GM12878 (cell line): ENCODE measurements at regions of chr1 and their contacts with region 1.

Region 1: GRCh38 chr1:179973198-179974110 is 18.8 kb downstream of the CEP350 start:
- DNase-seq: no peak
- ATAC-seq: peak; percentile 55; the same call in 2 of the 3 replicates
- H3K4me3 ChIP-seq: no peak overlapping the region
- H3K27ac ChIP-seq: no peak overlapping the region
- H3K4me1 ChIP-seq: no peaks in the 10 kb centered on the region; the same call in 1 of the 2 replicates
- H3K27me3 ChIP-seq: no peaks in the 10 kb centered on the region
- CTCF ChIP-seq: no peak; a peak in 1 of 6 replicates
- EP300 ChIP-seq: no peak
- POLR2A ChIP-seq: no peak
- RAD21 ChIP-seq: no peak

Region 2: DNA sequence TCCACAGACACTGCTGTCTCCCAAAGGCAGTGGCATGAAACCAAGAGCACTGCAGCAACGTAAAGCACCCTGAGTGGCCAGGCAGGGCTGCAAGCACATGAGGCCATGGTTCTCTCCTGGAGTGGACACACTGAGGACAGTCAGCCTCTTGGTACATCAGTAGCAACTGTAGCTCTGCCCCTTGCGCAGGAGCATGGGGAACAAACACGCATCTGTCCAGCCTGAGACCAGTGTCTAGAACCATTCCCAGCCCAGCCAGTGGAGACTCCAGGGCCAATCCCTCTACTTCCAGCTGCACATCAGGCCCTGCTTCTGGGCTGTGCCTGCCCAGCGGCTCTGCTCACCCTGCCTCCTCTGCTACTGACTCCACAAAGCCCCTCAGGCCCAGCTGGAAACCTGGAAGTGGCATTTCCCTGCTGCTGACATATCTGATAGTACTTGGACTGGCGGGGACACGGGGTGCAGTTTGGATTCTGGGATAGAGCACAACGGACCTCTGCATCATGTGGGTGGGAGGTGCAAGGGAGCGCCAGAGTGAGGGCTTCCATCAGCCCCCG is 144.8 kb before region 1 on chr1:
- CTCF ChIA-PET with region 1: no interaction called
- POLR2A ChIA-PET with region 1: no interaction called
- RAD21 ChIA-PET with region 1: no interaction called
- SMC1A ChIA-PET with region 1: no interaction called
- in situ Hi-C with region 1: no loop called
- intact Hi-C with region 1: no loop called
- DNase-seq: no peak
- ATAC-seq: no peak
- H3K4me3 ChIP-seq: no peak overlapping the region
- H3K27ac ChIP-seq: no peak overlapping the region
- H3K4me1 ChIP-seq: peaks cover 3% of the 10 kb centered on the region; the same call in 1 of the 2 replicates
- H3K27me3 ChIP-seq: no peaks in the 10 kb centered on the region; a peak in 1 of 4 replicates
- CTCF ChIP-seq: no peak
- EP300 ChIP-seq: no peak
- POLR2A ChIP-seq: no peak
- RAD21 ChIP-seq: no peak

Region 3: DNA sequence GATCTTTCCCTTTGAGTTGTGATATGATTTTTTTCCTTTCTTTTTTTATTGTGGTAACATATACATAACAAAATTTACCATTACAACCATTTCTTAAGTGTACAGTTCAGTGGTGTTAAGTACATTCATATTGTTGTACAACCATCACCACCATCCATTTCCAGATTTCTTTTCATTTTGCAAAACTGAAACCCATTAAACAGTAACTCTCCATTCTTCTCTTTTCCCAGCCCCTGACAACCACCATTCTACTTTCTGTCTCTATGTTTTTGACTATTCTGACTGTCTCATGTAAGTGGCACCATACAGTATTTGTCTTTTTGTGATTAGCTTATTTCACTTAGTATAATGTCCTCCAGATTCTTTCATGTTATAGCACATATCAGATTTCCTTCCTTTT is 11.5 kb after region 1 on chr1:
- CTCF ChIA-PET with region 1: interaction called, 11 read pairs
- POLR2A ChIA-PET with region 1: interaction called, 5 read pairs
- RAD21 ChIA-PET with region 1: interaction called, 3 read pairs
- SMC1A ChIA-PET with region 1: interaction called, 4 read pairs
- in situ Hi-C with region 1: no loop called
- intact Hi-C with region 1: no loop called
- DNase-seq: no peak
- ATAC-seq: peak; percentile 54; the same call in 2 of the 3 replicates
- H3K4me3 ChIP-seq: no peak overlapping the region
- H3K27ac ChIP-seq: no peak overlapping the region
- H3K4me1 ChIP-seq: no peaks in the 10 kb centered on the region
- H3K27me3 ChIP-seq: no peaks in the 10 kb centered on the region
- CTCF ChIP-seq: no peak
- EP300 ChIP-seq: no peak
- POLR2A ChIP-seq: no peak
- RAD21 ChIP-seq: no peak

Region 4: GRCh38 chr1:179996099-179996498 is 22.6 kb after region 1 on chr1:
- CTCF ChIA-PET with region 1: interaction called, 14 read pairs
- POLR2A ChIA-PET with region 1: no interaction called
- RAD21 ChIA-PET with region 1: interaction called, 5 read pairs
- SMC1A ChIA-PET with region 1: interaction called, 25 read pairs
- in situ Hi-C with region 1: no loop called
- intact Hi-C with region 1: no loop called
- DNase-seq: no peak
- ATAC-seq: peak; percentile 86
- H3K4me3 ChIP-seq: no peak overlapping the region
- H3K27ac ChIP-seq: no peak overlapping the region
- H3K4me1 ChIP-seq: peaks cover 17% of the 10 kb centered on the region
- H3K27me3 ChIP-seq: no peaks in the 10 kb centered on the region
- CTCF ChIP-seq: no peak
- EP300 ChIP-seq: no peak
- POLR2A ChIP-seq: no peak
- RAD21 ChIP-seq: no peak

Region 5: DNA sequence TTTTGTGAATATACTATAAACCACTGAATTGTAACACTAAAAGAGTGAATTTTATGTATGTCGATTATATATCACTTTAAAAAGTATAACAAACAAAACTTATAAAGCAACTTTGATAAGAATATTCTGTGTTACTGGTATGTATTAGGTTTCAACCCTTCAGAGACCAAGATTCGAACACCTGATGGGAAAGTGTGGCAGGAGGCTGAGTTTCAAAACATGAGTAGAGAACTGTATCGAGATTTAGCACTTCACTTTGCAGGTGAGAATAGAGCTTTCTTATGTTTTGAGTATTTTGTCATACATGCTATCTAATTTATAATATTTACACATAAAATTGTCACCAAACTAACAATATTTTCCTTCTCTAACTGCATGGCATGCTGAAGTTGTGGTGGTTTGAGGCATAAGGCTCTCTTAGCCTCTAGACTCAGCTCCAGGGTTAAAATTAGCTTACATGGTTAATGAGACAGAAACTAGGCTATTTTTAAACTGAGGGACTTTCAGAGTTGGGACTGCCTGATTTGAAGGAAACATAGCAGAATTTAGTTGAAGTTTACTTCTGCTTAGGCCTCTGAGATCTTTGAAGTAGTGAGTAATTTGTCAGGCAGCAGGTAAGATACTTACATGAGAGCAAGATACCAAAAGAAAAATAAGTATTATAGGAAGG is 29.7 kb after region 1 on chr1:
- CTCF ChIA-PET with region 1: interaction called, 3 read pairs
- POLR2A ChIA-PET with region 1: interaction called, 3 read pairs
- RAD21 ChIA-PET with region 1: interaction called, 7 read pairs
- SMC1A ChIA-PET with region 1: interaction called, 25 read pairs
- in situ Hi-C with region 1: no loop called
- intact Hi-C with region 1: no loop called
- DNase-seq: peak; percentile 44
- ATAC-seq: peak; percentile 94
- H3K4me3 ChIP-seq: no peak overlapping the region
- H3K27ac ChIP-seq: peak overlapping the region; percentile 61
- H3K4me1 ChIP-seq: peaks cover 18% of the 10 kb centered on the region
- H3K27me3 ChIP-seq: no peaks in the 10 kb centered on the region
- CTCF ChIP-seq: no peak
- EP300 ChIP-seq: no peak
- POLR2A ChIP-seq: no peak
- RAD21 ChIP-seq: no peak